ENCODE measurements at regions of chr1 and their contacts with region 1.

Region 1: DNA sequence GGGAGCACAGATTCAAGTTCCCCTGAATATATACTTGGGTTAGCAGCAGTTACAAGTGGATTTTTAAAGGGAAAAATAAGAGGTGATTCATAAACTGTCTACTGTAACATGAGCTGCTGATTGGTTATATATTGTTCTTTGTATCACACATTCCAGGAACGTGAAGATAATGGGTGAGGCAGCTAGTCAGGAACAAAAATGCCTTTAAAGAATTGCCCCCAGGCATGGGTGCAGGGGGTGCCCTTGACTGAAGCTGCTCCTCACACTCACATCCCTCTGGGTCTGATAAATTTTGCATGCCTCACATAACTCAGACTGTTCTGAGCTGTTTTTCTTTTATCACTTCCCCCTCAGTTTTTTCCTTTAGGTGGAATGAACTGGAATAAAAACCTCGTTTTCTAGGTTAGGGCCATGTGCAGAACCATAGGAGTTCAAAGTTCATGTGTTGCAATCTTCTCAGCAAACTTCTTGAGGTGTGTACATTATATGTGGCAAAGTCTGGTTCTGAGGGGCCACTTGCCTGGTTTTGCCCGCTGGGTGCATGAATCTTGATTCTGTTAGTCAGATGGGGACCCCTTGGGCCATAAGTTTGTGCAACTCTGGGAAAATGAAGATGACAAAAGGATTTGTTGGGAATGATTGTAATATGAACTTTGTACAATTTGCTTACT is 21.1 kb downstream of the TBX19 start:
- DNase-seq: peak; percentile 94
- H3K4me3 ChIP-seq: no peak overlapping the region
- H3K27ac ChIP-seq: peak overlapping the region; percentile 76
- H3K4me1 ChIP-seq: peaks cover 34% of the 10 kb centered on the region
- H3K27me3 ChIP-seq: no peaks in the 10 kb centered on the region
- CTCF ChIP-seq: no peak

Region 2: GRCh38 chr1:167175901-167176300 is 1125.9 kb before region 1 on chr1:
- CTCF ChIA-PET with region 1: no interaction called
- dilution Hi-C with region 1: no loop called
- in situ Hi-C with region 1: no loop called
- intact Hi-C with region 1: loop called (anchors 5 kb)
- DNase-seq: peak; percentile 56
- H3K4me3 ChIP-seq: no peak overlapping the region
- H3K27ac ChIP-seq: peak overlapping the region; percentile 25
- H3K4me1 ChIP-seq: peaks cover 18% of the 10 kb centered on the region
- H3K27me3 ChIP-seq: no peaks in the 10 kb centered on the region
- CTCF ChIP-seq: no peak

Region 3: DNA sequence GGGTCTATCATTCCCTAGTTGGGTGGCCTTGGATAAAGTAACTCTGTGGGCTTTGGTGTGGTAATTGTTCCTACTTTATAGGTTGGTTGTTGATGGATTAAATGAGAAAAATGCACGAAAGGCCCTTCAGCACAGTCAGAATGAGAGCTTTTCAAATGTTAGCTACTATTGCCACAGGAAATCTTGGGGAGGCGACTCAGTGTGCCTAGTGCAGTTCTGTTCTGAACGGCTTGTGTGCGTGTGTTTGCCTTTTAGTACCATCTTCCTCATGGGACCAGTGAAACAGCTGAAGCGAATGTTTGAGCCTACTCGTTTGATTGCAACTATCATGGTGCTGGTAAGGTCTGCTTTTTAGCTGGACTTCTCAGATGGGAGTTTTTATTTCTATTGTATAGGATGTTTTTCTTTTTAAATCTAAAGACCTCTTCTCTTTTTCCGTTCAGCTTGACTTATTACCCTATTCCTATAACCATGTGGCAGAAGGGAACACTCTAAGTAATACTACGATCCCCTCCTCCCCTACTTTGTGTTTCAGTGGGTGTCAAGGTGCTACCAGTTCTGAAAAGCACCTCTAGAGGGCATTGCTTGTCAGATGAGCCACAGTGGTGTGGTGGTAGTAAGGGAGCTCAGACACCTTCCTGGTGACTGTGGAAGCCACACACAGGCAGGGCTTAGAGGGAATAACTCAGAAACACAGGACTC is 66.8 kb before region 1 on chr1:
- CTCF ChIA-PET with region 1: interaction called, 4 read pairs
- dilution Hi-C with region 1: no loop called
- in situ Hi-C with region 1: no loop called
- intact Hi-C with region 1: loop called (anchors 5 kb)
- DNase-seq: peak; percentile 62
- H3K4me3 ChIP-seq: no peak overlapping the region
- H3K27ac ChIP-seq: no peak overlapping the region
- H3K4me1 ChIP-seq: peaks cover 2% of the 10 kb centered on the region
- H3K27me3 ChIP-seq: no peaks in the 10 kb centered on the region
- CTCF ChIP-seq: peak; percentile 83 to 89

Measured in mammary epithelial cell (primary cell).